ENCODE measurements at regions of chr3 and their contacts with region 1.

Region 1: GRCh38 chr3:179562591-179563270 is at the start of gene ACTL6A:
- DNase-seq: peak; percentile 99
- ATAC-seq: peak; percentile 93
- H3K4me3 ChIP-seq: peak within 1 kb of the TSS; percentile 80 to 84
- H3K27ac ChIP-seq: peak within 1 kb of the TSS; percentile 81
- H3K4me1 ChIP-seq: peaks cover 2 to 16% of the 10 kb centered on the region in 2 experiments; a peak in 1 of 4 replicates
- H3K27me3 ChIP-seq: no peaks in the 10 kb centered on the region
- CTCF ChIP-seq: no peak
- POLR2A ChIP-seq: peak; percentile 82
- RAD21 ChIP-seq: no peak
- total RNA-seq, gene ACTL6A: 61.9 TPM

Region 2: GRCh38 chr3:178436773-178437172 is 1126.0 kb before region 1 on chr3:
- CTCF ChIA-PET with region 1: no interaction called
- POLR2A ChIA-PET with region 1: no interaction called
- RAD21 ChIA-PET with region 1: no interaction called
- intact Hi-C with region 1: loop called (anchors 5 kb)
- DNase-seq: peak; percentile 16
- ATAC-seq: no peak
- H3K4me3 ChIP-seq: no peak overlapping the region
- H3K27ac ChIP-seq: no peak overlapping the region
- H3K4me1 ChIP-seq: peaks cover 0 to 5% of the 10 kb centered on the region in 2 experiments; a peak in 1 of 4 replicates
- H3K27me3 ChIP-seq: no peaks in the 10 kb centered on the region
- CTCF ChIP-seq: peak; percentile 32 to 63 (median 62); a peak in 4 of 6 replicates
- POLR2A ChIP-seq: no peak
- RAD21 ChIP-seq: peak; percentile 59

Region 3: DNA sequence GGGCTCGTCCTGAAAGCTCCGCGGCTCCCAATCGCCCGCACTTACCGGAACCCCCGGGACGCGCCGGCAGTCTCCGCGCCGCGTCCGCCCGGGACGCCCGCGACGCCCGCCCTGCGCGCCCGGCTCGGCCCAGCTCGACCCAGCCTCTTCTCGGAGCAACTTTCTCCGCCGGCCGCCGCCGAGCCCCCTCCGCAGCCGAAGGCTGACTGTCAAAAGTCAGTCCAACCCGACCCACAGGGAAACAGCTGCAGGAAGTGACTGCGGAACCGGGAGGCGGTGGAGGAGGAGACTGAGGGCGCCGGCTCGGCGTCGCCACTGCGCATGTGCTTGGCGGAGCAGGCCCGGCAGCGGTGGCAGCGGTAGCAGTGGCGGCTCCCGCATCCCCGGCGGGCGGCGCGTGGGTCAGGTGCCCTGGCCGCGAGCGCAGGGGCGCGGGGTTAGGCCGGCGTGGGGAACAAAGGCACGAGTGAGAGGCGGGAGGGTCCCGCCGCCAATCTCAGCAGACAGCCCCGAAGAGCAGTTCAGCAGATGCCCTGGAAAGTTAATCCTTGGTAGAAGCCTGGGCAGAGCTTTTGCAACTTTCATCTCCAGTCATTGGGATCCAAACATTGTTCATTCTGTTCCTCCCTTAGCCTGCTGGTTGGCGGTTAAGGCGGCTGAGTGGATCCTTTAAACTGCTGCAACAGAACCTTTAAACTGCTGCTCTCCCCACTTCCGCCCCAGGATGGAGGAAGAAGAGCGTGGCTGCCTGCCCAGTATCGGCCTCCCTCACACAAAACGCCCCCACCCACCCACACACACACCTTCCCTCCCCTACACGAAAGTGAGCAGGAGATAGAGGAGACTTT is 491.0 kb before region 1 on chr3 and contains the start of gene ZMAT3:
- CTCF ChIA-PET with region 1: no interaction called
- POLR2A ChIA-PET with region 1: no interaction called
- RAD21 ChIA-PET with region 1: no interaction called
- intact Hi-C with region 1: loop called (anchors 2 kb)
- DNase-seq: peak; percentile 34
- ATAC-seq: peak; percentile 92
- H3K4me3 ChIP-seq: peak within 1 kb of the TSS; percentile 66 to 78
- H3K27ac ChIP-seq: peak within 1 kb of the TSS; percentile 68
- H3K4me1 ChIP-seq: peaks cover 11 to 24% of the 10 kb centered on the region in 2 experiments
- H3K27me3 ChIP-seq: no peaks in the 10 kb centered on the region
- CTCF ChIP-seq: no peak
- POLR2A ChIP-seq: peak; percentile 76
- RAD21 ChIP-seq: no peak
- total RNA-seq, gene ZMAT3: 12.1 TPM

Region 4: GRCh38 chr3:179322286-179323196 is 240.2 kb before region 1 on chr3 and contains the start of gene ZNF639:
- CTCF ChIA-PET with region 1: interaction called, 5 read pairs
- POLR2A ChIA-PET with region 1: interaction called, 4 read pairs
- RAD21 ChIA-PET with region 1: no interaction called
- intact Hi-C with region 1: loop called (anchors 2 kb)
- DNase-seq: peak; percentile 76
- ATAC-seq: peak; percentile 87
- H3K4me3 ChIP-seq: peak within 1 kb of the TSS; percentile 74 to 87
- H3K27ac ChIP-seq: peak within 1 kb of the TSS; percentile 90
- H3K4me1 ChIP-seq: peaks cover 7 to 29% of the 10 kb centered on the region in 2 experiments; a peak in 3 of 4 replicates
- H3K27me3 ChIP-seq: no peaks in the 10 kb centered on the region
- CTCF ChIP-seq: peak; percentile 34 to 74 (median 67); a peak in 5 of 6 replicates
- POLR2A ChIP-seq: peak; percentile 69
- RAD21 ChIP-seq: peak; percentile 42
- total RNA-seq, gene ZNF639: 47.5 TPM

Region 5: GRCh38 chr3:179624451-179624850 is 61.7 kb after region 1 on chr3:
- CTCF ChIA-PET with region 1: no interaction called
- POLR2A ChIA-PET with region 1: no interaction called
- RAD21 ChIA-PET with region 1: no interaction called
- intact Hi-C with region 1: no loop called
- DNase-seq: no peak
- ATAC-seq: no peak
- H3K4me3 ChIP-seq: no peak overlapping the region
- H3K27ac ChIP-seq: no peak overlapping the region
- H3K4me1 ChIP-seq: no peaks in the 10 kb centered on the region
- H3K27me3 ChIP-seq: no peaks in the 10 kb centered on the region
- CTCF ChIP-seq: no peak
- POLR2A ChIP-seq: no peak
- RAD21 ChIP-seq: no peak

Region 6: GRCh38 chr3:180601688-180602666 is 1039.2 kb after region 1 on chr3 and contains the start of gene TTC14:
- CTCF ChIA-PET with region 1: no interaction called
- POLR2A ChIA-PET with region 1: no interaction called
- RAD21 ChIA-PET with region 1: no interaction called
- intact Hi-C with region 1: loop called (anchors 2 kb)
- DNase-seq: peak; percentile 94
- ATAC-seq: peak; percentile 95
- H3K4me3 ChIP-seq: peak within 1 kb of the TSS; percentile 89 to 95
- H3K27ac ChIP-seq: peak within 1 kb of the TSS; percentile 77
- H3K4me1 ChIP-seq: peaks cover 8 to 12% of the 10 kb centered on the region in 2 experiments; a peak in 3 of 4 replicates
- H3K27me3 ChIP-seq: no peaks in the 10 kb centered on the region
- CTCF ChIP-seq: no peak
- POLR2A ChIP-seq: peak; percentile 64
- RAD21 ChIP-seq: no peak
- total RNA-seq, gene TTC14: 31.5 TPM

Measured in HCT116 (cell line).